ENCODE measurements at regions of chr6 and their contacts with region 1.

Region 1: GRCh38 chr6:6931071-6932025 is 176.4 kb upstream of the RREB1 start:
- DNase-seq: no peak
- ATAC-seq: no peak
- H3K4me3 ChIP-seq: no peak overlapping the region
- H3K4me3 Mint-ChIP-seq: peak overlapping the region; percentile 42
- H3K27ac ChIP-seq: no peak overlapping the region
- H3K27ac Mint-ChIP-seq: peak overlapping the region; percentile 24
- H3K4me1 ChIP-seq: peaks cover 0 to 9% of the 10 kb centered on the region in 2 donors
- H3K4me1 Mint-ChIP-seq: peaks cover 18% of the 10 kb centered on the region
- H3K27me3 ChIP-seq: no peaks in the 10 kb centered on the region
- H3K27me3 Mint-ChIP-seq: peaks cover 4% of the 10 kb centered on the region
- CTCF ChIP-seq: no peak

Region 2: GRCh38 chr6:7035837-7036249 is 104.5 kb after region 1 on chr6:
- CTCF ChIA-PET with region 1: no interaction called
- POLR2A ChIA-PET with region 1: interaction called, 10 read pairs
- intact Hi-C with region 1: no loop called
- DNase-seq: no peak
- ATAC-seq: no peak
- H3K4me3 ChIP-seq: no peak overlapping the region
- H3K4me3 Mint-ChIP-seq: no peak overlapping the region
- H3K27ac ChIP-seq: no peak overlapping the region
- H3K27ac Mint-ChIP-seq: no peak overlapping the region
- H3K4me1 ChIP-seq: peaks cover 0 to 3% of the 10 kb centered on the region in 2 donors
- H3K4me1 Mint-ChIP-seq: peaks cover 2% of the 10 kb centered on the region
- H3K27me3 ChIP-seq: no peaks in the 10 kb centered on the region
- H3K27me3 Mint-ChIP-seq: peaks cover 4% of the 10 kb centered on the region
- CTCF ChIP-seq: no peak

Region 3: GRCh38 chr6:7085911-7086310 is 154.6 kb after region 1 on chr6:
- CTCF ChIA-PET with region 1: no interaction called
- POLR2A ChIA-PET with region 1: no interaction called
- intact Hi-C with region 1: no loop called
- DNase-seq: peak; percentile 32
- ATAC-seq: no peak
- H3K4me3 ChIP-seq: no peak overlapping the region
- H3K4me3 Mint-ChIP-seq: peak overlapping the region; percentile 86
- H3K27ac ChIP-seq: peak overlapping the region; percentile 50 to 73
- H3K27ac Mint-ChIP-seq: peak overlapping the region; percentile 88
- H3K4me1 ChIP-seq: peaks cover 23 to 24% of the 10 kb centered on the region in 2 donors
- H3K4me1 Mint-ChIP-seq: peaks cover 27% of the 10 kb centered on the region
- H3K27me3 ChIP-seq: no peaks in the 10 kb centered on the region
- H3K27me3 Mint-ChIP-seq: no peaks in the 10 kb centered on the region
- CTCF ChIP-seq: no peak